Naive thymus-derived CD4-positive, alpha-beta T cell (primary cell): ENCODE measurements at regions of chr11 and their contacts with region 1.

Region 1: DNA sequence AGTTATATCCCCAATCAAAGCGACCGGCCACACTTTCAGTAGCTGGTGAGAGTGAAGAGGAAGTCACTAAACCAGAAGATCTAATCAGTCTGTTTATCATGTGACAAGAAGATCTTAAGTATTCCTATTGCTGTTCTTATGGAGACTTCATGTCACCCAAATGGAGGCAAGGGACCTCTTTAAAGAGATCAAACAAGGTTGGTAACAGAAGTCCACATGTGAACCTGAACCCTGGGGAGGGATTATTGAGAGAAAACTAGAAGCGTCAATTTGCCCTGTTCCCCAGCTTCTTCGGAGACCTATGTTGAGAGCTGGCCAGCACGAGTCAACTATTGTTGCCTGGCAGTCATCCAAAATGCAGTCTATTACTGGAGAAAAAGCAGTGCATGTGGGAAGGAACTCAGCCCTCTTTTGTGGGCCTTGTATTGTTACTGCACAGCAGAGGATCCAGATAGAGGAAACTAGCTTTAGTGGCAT is 76.9 kb upstream of the CTSC start:
- DNase-seq: peak in 6 of 9 donors; percentile 16 to 50 (median 38)
- ATAC-seq: peak; percentile 73
- H3K4me3 ChIP-seq: peak overlapping the region; percentile 18
- H3K4me3 Mint-ChIP-seq: peak overlapping the region; percentile 58 to 84 (median 73)
- H3K27ac ChIP-seq: peak overlapping the region; percentile 6
- H3K27ac Mint-ChIP-seq: peak overlapping the region in 7 of 9 donors; percentile 48 to 88 (median 74)
- H3K4me1 ChIP-seq: peaks cover 24 to 37% of the 10 kb centered on the region in 2 donors
- H3K4me1 Mint-ChIP-seq: peaks cover 27 to 61% (median 34%) of the 10 kb centered on the region in 7 donors
- H3K27me3 ChIP-seq: no peaks in the 10 kb centered on the region
- H3K27me3 Mint-ChIP-seq: no peaks in the 10 kb centered on the region

Region 2: DNA sequence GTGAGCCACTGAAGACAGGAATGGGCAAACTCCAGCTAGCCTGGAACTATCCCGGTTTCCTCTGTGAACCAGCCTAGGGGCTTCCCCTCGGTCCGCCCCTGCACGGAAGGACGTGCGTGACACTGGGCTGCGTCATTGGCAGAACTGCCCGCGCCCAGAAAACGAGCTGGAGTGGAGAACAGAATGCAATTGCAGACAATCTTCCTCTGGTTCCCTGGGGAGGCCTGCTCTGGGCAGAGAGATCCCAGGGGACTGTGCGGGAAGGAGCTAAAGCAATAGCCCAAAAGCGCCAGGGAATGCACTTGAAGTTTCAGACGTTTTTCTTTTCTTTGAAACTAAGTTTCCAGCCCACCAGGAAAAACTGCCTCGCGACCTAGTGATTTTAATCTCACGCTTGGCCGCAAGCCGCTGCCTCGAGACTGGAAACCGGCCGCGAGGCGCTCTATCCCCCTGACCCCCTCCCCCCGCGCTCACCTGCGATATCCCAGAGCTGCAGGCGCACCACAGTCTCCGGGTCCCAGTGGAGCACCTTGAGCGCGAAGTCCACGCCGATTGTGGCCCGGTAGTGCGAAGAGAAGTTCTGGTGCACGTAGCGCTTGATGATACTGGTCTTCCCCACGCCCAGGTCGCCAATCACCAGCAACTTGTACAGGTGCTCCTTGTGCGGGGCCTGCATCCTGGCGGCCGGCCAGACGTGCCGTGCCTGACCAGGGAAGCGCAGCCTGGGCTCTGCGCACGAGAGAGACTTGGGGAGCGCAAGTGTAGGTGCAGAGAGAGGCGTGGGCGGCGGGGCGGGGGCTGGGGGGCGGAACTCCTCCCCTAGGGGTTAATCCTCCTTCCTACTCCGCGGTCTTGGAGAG is 239.5 kb before region 1 on chr11 and contains the start of gene RAB38:
- CTCF ChIA-PET with region 1: no interaction called
- POLR2A ChIA-PET with region 1: no interaction called
- intact Hi-C with region 1: loop called in 1 of 2 experiments (anchors 5 kb)
- DNase-seq: peak in 3 of 9 donors; percentile 1 to 63 (median 2)
- ATAC-seq: peak; percentile 75
- H3K4me3 ChIP-seq: peak within 1 kb of the TSS; percentile 45
- H3K4me3 Mint-ChIP-seq: peak within 1 kb of the TSS; percentile 50 to 85 (median 71)
- H3K27ac ChIP-seq: no peak within 1 kb of the TSS
- H3K27ac Mint-ChIP-seq: peak within 1 kb of the TSS in 2 of 9 donors; percentile 25 to 77
- H3K4me1 ChIP-seq: peaks cover 0 to 4% of the 10 kb centered on the region in 2 donors
- H3K4me1 Mint-ChIP-seq: peaks cover 0 to 47% (median 8%) of the 10 kb centered on the region in 7 donors
- H3K27me3 ChIP-seq: no peaks in the 10 kb centered on the region
- H3K27me3 Mint-ChIP-seq: peaks cover 0 to 9% (median 7%) of the 10 kb centered on the region in 5 donors
- total RNA-seq, gene RAB38: 0.21 to 1.9 (median 0.92) TPM in 4 of 5 experiments, not detected in the other

Region 3: DNA sequence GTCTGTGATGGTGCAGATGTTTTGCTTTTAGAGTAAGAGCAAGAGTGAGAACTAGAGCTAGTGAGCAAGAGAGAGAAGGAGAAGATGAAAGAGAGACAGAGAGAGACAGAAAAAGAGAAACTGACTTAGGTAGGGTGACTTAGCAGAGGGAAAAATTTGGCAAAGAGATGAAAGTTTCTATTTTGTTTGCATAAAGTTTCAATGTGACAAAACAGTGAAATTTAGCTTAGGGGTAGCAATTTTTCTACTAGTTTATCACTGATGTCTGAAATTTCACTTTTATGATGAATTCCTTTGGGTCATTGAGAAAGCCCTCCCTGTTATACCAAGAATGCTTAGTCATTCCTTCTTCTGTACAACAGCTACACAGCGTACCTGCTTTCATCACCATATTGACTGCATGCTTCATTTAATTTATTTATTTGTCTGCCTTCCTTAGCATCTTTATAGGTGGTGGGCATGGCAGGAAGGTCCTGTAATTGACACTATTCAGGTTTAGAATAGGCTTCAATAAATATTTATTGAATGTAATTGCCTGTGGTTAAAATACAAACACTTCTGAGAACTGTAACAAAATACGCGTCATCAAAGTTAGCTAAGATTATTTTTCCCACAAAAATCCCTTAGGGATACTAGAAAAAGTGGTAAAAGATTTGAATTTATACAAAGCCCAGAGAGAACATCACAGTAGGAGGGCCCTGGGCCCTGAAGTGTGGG is 56.9 kb before region 1 on chr11:
- CTCF ChIA-PET with region 1: interaction called, 3 read pairs
- POLR2A ChIA-PET with region 1: interaction called, 3 read pairs
- intact Hi-C with region 1: loop called in 1 of 2 experiments (anchors 2 kb)
- DNase-seq: no peak
- ATAC-seq: peak; percentile 32
- H3K4me3 ChIP-seq: no peak overlapping the region
- H3K4me3 Mint-ChIP-seq: peak overlapping the region in 1 of 10 donors; percentile 59
- H3K27ac ChIP-seq: no peak overlapping the region
- H3K27ac Mint-ChIP-seq: peak overlapping the region in 2 of 9 donors; percentile 63 to 71
- H3K4me1 ChIP-seq: peaks cover 16 to 20% of the 10 kb centered on the region in 2 donors
- H3K4me1 Mint-ChIP-seq: peaks cover 19 to 48% (median 38%) of the 10 kb centered on the region in 7 donors
- H3K27me3 ChIP-seq: no peaks in the 10 kb centered on the region
- H3K27me3 Mint-ChIP-seq: peaks cover 0 to 3% (median 0%) of the 10 kb centered on the region in 5 donors

Region 4: GRCh38 chr11:88744140-88744539 is 329.7 kb after region 1 on chr11:
- CTCF ChIA-PET with region 1: no interaction called
- POLR2A ChIA-PET with region 1: no interaction called
- intact Hi-C with region 1: no loop called
- DNase-seq: no peak
- ATAC-seq: no peak
- H3K4me3 ChIP-seq: no peak overlapping the region
- H3K4me3 Mint-ChIP-seq: no peak overlapping the region
- H3K27ac ChIP-seq: no peak overlapping the region
- H3K27ac Mint-ChIP-seq: no peak overlapping the region
- H3K4me1 ChIP-seq: no peaks in the 10 kb centered on the region
- H3K4me1 Mint-ChIP-seq: peaks cover 0 to 3% (median 0%) of the 10 kb centered on the region in 7 donors
- H3K27me3 ChIP-seq: no peaks in the 10 kb centered on the region
- H3K27me3 Mint-ChIP-seq: no peaks in the 10 kb centered on the region